Cardiac septum (tissue), 1 donor: ENCODE measurements at regions of chr11 and their contacts with region 1.

Region 1: GRCh38 chr11:111735262-111736116 is 30.7 kb downstream of the PPP2R1B start:
- DNase-seq: no peak

Region 2: DNA sequence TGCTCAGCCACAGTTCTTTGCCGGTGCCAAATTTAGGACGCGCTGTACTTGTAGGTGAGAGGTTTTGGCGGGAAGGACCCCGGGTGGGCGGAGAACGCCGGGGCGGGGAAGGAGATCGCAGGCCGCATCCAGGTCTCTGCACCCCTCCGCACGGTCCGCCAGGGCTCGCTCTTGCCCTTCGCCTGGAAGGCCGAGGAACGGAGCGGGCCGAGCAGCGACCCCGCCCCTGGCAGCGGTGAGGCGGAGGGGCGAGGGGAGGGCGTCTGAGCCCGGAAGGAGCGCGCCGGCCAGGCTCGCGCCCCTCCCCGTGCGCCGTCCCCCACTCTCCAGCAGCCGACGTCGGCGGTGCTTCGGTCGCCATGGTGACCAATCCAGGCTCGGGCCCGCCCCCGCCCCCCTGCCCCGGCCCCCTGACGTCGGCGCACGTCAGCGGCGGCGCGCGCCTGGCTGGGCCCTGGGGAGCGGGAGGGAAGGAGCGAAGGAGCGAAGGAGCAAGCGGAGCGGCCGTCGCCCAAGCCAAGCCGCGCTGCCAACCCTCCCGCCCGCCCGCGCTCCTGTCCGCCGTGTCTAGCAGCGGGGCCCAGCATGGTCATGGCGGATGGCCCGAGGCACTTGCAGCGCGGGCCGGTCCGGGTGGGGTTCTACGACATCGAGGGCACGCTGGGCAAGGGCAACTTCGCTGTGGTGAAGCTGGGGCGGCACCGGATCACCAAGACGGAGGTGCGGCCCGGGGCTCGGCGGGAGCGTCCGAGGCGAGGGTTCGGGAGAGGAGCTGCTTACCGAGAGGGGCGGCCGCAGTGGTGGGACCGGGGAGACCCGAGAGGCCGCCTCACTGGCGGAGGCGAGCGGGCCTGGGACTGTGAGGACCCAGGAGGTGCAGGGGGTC is 133.3 kb before region 1 on chr11 and contains the start of gene SIK2:
- intact Hi-C with region 1: loop called (anchors 10 kb)
- DNase-seq: peak; percentile 93
- total RNA-seq, gene SIK2: 27.3 TPM

Region 3: GRCh38 chr11:111766093-111766833 is 30.8 kb after region 1 on chr11 and contains the start of gene PPP2R1B:
- intact Hi-C with region 1: loop called (anchors 5 kb)
- DNase-seq: peak; percentile 93
- total RNA-seq, gene PPP2R1B: 12.9 TPM